ENCODE measurements at regions of chr1 and their contacts with region 1.

Region 1: DNA sequence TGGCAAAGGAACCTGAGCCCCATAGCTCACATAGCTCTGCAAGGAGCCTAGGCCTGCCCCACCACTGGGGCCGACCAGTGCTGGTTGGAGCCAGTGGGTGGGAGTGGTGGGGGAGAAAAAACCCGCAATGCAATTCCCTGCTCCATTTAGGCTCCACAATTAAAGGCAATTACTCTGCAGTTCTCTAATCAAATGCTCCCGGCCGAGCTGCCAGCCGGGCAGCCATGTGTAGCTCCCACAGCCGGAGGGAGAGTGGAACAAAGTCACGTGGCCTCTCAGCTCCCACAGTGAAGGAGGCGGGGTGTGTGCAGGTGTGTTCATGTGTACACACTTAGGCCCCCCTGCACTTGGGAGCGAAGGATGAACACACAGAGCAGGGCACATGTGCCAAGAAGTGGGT is 81.6 kb downstream of the KIRREL1 start:
- DNase-seq: no peak
- H3K4me3 ChIP-seq: no peak overlapping the region
- H3K27ac ChIP-seq: no peak overlapping the region
- H3K4me1 ChIP-seq: peaks cover 0 to 38% (median 25%) of the 10 kb centered on the region in 4 experiments; a peak in 6 of 7 replicates
- H3K27me3 ChIP-seq: no peaks in the 10 kb centered on the region
- CTCF ChIP-seq: no peak
- EP300 ChIP-seq: no peak
- POLR2A ChIP-seq: no peak
- RAD21 ChIP-seq: no peak

Region 2: DNA sequence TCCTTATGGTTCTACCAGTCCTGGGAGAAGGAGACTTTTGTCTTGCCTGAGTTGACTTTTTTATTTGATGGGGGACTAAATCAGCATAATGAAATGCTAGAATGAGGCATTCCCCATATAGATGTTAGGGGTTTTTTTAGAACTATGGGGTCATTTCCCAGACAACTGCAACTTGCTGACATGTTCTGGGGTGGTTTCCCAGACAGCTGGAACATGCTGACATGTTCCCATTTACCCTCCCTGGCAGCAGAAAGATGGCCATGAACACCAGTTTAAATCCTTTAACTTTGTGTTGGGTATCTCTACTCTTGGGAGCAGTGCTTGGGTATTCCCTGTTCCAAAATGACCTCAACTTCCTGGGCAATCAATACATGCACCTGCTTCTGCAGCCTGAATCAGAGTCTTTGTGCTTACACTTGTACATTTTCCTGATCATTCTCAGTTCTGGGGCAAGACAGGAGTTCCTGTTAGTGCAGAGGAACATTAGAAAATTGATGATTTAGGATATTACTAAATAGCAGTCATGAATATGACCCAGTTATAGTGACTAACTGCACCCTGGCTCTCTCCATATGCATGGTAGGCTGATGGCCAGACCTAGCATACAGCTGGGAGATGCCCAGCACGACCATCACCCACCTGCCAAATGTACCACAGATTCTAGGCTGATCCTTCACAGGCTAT is 158.0 kb before region 1 on chr1:
- CTCF ChIA-PET with region 1: no interaction called
- POLR2A ChIA-PET with region 1: no interaction called
- DNase-seq: no peak
- H3K4me3 ChIP-seq: no peak overlapping the region
- H3K27ac ChIP-seq: no peak overlapping the region
- H3K4me1 ChIP-seq: no peaks in the 10 kb centered on the region; a peak in 1 of 7 replicates
- H3K27me3 ChIP-seq: 0 out of 7 replicates have a peak, but pooled peaks cover 0 to 4% (median 0%) of the 10 kb centered on the region in 4 experiments
- CTCF ChIP-seq: no peak
- EP300 ChIP-seq: no peak
- POLR2A ChIP-seq: no peak
- RAD21 ChIP-seq: no peak

Region 3: DNA sequence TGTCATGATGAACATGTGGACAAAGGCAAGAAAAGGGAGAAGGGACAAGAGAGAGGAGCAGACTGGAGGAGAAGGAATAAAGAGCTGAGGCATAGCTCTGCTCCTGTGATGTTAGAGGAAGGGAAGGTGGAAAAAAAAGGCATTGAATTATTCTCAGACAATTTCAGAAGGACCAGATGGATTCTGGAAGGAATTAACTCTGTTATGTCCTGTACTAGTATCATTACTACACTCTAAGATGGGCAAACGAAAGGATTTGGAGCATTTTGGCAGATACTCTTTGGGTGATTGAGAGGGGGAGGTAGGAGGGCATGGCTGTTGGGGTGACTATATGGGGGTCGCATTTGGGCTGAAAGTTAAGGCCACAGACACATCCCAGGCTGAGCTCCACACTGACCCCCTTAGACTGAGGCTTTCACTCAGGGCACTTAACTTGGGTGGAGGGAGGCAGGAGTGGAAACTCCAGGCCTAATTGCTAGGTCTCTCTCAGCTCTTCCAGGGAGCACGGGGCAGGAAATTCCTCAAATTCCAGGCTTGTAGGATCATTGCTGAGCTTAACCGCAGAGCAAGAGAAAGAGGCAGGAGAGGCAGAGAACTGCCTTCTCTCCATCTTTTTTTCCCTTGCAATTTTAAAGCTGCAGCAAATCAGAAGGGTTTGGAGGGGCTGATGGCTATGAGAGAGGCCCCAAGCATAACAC is 55.8 kb before region 1 on chr1:
- CTCF ChIA-PET with region 1: interaction called, 10 read pairs
- POLR2A ChIA-PET with region 1: interaction called, 4 read pairs
- DNase-seq: peak in 1 of 2 experiments; percentile 57
- H3K4me3 ChIP-seq: peak overlapping the region in 1 of 4 experiments; percentile 40; a peak in 1 of 8 replicates
- H3K27ac ChIP-seq: peak overlapping the region; percentile 74
- H3K4me1 ChIP-seq: peaks cover 15 to 47% (median 23%) of the 10 kb centered on the region in 4 experiments
- H3K27me3 ChIP-seq: no peaks in the 10 kb centered on the region
- CTCF ChIP-seq: no peak
- EP300 ChIP-seq: 0 out of 3 replicates have a peak, but pooled peaks of 1 of the 2 experiments have one; percentile 22
- POLR2A ChIP-seq: peak; percentile 40 to 71
- RAD21 ChIP-seq: no peak

Region 4: DNA sequence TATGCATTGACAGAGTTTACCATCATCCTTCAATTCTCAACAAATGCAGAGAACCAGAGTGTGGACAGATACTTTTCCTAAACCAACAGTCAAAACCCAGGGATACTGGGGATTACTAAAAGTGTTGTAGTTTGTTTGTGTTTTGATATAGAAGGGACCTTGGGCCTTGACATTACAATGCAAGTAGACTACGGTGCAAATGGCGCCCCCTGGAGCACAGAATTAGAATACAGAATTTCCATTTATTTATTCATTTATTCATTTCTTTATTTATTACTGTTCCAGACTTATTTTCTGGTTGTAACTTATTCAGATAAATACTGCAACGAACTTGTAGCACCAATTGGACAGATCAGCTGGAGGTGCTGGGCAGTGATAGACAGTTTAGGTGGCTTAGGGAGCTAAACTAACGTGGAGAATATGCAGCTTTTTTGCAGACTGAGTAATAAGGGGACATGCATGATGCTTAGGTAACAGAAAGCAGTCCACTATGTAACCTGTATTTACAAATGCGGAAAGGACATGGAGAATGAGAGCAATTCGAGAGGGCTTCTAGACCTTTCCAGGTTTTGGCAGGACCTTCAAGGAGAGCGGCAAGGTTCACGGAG is 39.0 kb before region 1 on chr1:
- CTCF ChIA-PET with region 1: interaction called, 89 read pairs
- POLR2A ChIA-PET with region 1: interaction called, 3 read pairs
- DNase-seq: no peak
- H3K4me3 ChIP-seq: no peak overlapping the region
- H3K27ac ChIP-seq: no peak overlapping the region; the same call in 1 of the 2 replicates
- H3K4me1 ChIP-seq: peaks cover 3 to 12% (median 7%) of the 10 kb centered on the region in 4 experiments
- H3K27me3 ChIP-seq: no peaks in the 10 kb centered on the region
- CTCF ChIP-seq: peak in 2 of 3 experiments; percentile 57 to 65; a peak in 3 of 4 replicates
- EP300 ChIP-seq: no peak
- POLR2A ChIP-seq: no peak
- RAD21 ChIP-seq: peak; percentile 51 to 61

Region 5: GRCh38 chr1:158055854-158056253 is 19.2 kb before region 1 on chr1:
- CTCF ChIA-PET with region 1: interaction called, 27 read pairs
- POLR2A ChIA-PET with region 1: interaction called, 4 read pairs
- DNase-seq: no peak
- H3K4me3 ChIP-seq: no peak overlapping the region
- H3K27ac ChIP-seq: no peak overlapping the region
- H3K4me1 ChIP-seq: peaks cover 1 to 24% (median 12%) of the 10 kb centered on the region in 4 experiments
- H3K27me3 ChIP-seq: no peaks in the 10 kb centered on the region
- CTCF ChIP-seq: no peak
- EP300 ChIP-seq: no peak
- POLR2A ChIP-seq: no peak
- RAD21 ChIP-seq: no peak

Region 6: GRCh38 chr1:158095737-158096335 is 20.8 kb after region 1 on chr1:
- CTCF ChIA-PET with region 1: interaction called, 15 read pairs
- POLR2A ChIA-PET with region 1: no interaction called
- DNase-seq: peak; percentile 50 to 73
- H3K4me3 ChIP-seq: no peak overlapping the region
- H3K27ac ChIP-seq: no peak overlapping the region
- H3K4me1 ChIP-seq: peaks cover 8 to 25% (median 18%) of the 10 kb centered on the region in 4 experiments
- H3K27me3 ChIP-seq: no peaks in the 10 kb centered on the region
- CTCF ChIP-seq: peak; percentile 94 to 96 (median 94)
- EP300 ChIP-seq: no peak
- POLR2A ChIP-seq: no peak
- RAD21 ChIP-seq: peak; percentile 77 to 81